ENCODE measurements at regions of chr12 and their contacts with region 1.

Region 1: DNA sequence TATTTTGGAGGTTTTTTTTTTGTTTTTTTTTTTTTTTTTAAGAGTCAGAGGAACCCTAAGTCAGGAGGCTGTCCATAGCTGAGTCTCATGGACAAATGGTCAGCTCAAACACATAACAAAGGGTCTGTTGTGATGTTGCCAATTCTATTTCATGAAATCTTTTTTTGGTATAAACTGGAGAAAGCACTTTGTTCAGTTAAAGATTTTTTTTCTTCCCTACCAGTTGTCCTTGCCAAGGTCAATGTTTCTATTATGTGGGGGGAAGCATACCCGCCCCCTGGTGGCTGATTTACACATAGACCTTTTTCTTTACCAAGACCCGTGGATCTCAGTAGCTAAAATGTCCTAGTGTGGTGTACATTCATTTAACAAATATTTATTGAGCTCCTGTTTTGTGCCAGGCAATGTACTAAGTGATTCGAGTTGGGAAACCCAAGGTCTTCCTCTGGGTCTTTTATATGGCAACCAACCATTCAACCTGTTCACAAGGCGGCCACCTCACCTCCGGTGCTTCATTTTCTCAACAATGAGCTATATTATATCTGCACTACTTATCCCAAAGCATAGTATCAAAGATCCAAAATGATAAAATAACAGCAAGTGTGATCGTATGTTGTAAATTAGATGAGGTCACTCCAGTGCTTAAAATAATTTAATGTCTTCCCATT is 214.5 kb downstream of the PAH start:
- DNase-seq: peak in 2 of 9 donors; percentile 1 to 37
- ATAC-seq: no peak
- H3K4me3 ChIP-seq: no peak overlapping the region
- H3K4me3 Mint-ChIP-seq: no peak overlapping the region
- H3K27ac ChIP-seq: no peak overlapping the region
- H3K27ac Mint-ChIP-seq: no peak overlapping the region
- H3K4me1 ChIP-seq: no peaks in the 10 kb centered on the region
- H3K4me1 Mint-ChIP-seq: no peaks in the 10 kb centered on the region
- H3K27me3 ChIP-seq: no peaks in the 10 kb centered on the region
- H3K27me3 Mint-ChIP-seq: peaks cover 8 to 31% (median 8%) of the 10 kb centered on the region in 5 donors

Region 2: DNA sequence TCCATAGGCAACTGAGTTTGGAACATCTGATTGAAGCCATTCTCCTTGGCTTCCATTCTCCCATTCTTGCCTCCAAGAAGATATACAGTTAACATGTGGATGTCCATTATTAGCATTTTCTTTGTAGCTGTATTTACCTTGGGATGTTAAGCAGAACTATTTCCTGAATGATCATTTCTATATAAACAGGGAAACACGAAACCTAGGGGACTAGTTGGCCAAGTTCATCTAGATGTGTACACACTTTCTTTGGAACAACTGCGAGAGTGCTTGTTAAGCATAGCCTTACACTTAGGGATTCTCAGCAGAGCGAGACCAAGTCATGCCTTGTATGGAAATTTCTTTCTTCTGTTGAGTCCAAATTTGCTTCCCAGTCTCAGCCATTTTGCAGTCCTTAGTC is 783.1 kb before region 1 on chr12:
- CTCF ChIA-PET with region 1: no interaction called
- POLR2A ChIA-PET with region 1: no interaction called
- intact Hi-C with region 1: loop called in 1 of 2 experiments (anchors 1 kb)
- DNase-seq: no peak
- ATAC-seq: no peak
- H3K4me3 ChIP-seq: no peak overlapping the region
- H3K4me3 Mint-ChIP-seq: no peak overlapping the region
- H3K27ac ChIP-seq: no peak overlapping the region
- H3K27ac Mint-ChIP-seq: no peak overlapping the region
- H3K4me1 ChIP-seq: no peaks in the 10 kb centered on the region
- H3K4me1 Mint-ChIP-seq: peaks cover 0 to 13% (median 3%) of the 10 kb centered on the region in 7 donors
- H3K27me3 ChIP-seq: no peaks in the 10 kb centered on the region
- H3K27me3 Mint-ChIP-seq: peaks cover 0 to 5% (median 0%) of the 10 kb centered on the region in 5 donors

Region 3: GRCh38 chr12:102095675-102096263 is 606.8 kb before region 1 on chr12:
- CTCF ChIA-PET with region 1: no interaction called
- POLR2A ChIA-PET with region 1: no interaction called
- intact Hi-C with region 1: loop called in 1 of 2 experiments (anchors 1 kb)
- DNase-seq: no peak
- ATAC-seq: peak; percentile 56
- H3K4me3 ChIP-seq: no peak overlapping the region
- H3K4me3 Mint-ChIP-seq: no peak overlapping the region
- H3K27ac ChIP-seq: no peak overlapping the region
- H3K27ac Mint-ChIP-seq: no peak overlapping the region
- H3K4me1 ChIP-seq: no peaks in the 10 kb centered on the region
- H3K4me1 Mint-ChIP-seq: peaks cover 0 to 5% (median 3%) of the 10 kb centered on the region in 7 donors
- H3K27me3 ChIP-seq: no peaks in the 10 kb centered on the region
- H3K27me3 Mint-ChIP-seq: no peaks in the 10 kb centered on the region

Region 4: DNA sequence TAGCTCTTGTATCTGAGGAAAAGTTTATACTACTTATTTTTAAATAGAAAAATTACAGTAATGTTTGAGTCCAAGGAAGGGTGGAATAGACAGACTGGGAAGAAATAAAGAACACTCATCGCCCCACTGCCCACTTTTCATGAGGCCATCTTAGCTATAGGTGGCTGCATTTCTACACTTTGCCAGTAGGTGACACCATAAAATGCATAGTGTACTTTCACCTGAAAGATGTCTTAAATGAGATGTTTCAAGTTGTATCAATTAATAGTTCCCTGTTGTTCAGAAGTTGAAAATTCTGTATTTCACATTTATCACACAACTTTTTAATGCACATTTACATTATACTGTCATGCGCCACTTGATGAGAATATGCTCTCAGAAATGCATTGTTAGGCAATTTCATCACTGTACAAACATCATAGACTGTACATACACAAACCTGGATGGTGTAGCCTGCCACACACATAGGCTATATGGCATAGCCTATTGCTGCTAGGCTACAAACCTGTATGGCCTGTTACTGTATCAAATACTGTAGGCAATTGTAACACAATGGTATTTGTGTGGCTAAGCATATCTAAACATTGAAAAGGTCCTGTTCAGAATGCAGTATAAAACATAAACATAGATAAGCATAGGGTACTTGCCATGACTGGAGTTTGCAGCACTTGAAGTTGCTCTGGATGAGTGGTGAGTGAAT is 532.5 kb before region 1 on chr12:
- CTCF ChIA-PET with region 1: no interaction called
- POLR2A ChIA-PET with region 1: no interaction called
- intact Hi-C with region 1: loop called in 1 of 2 experiments (anchors 2 kb)
- DNase-seq: peak in 2 of 9 donors; percentile 2 to 5
- ATAC-seq: peak; percentile 54
- H3K4me3 ChIP-seq: no peak overlapping the region
- H3K4me3 Mint-ChIP-seq: no peak overlapping the region
- H3K27ac ChIP-seq: no peak overlapping the region
- H3K27ac Mint-ChIP-seq: no peak overlapping the region
- H3K4me1 ChIP-seq: no peaks in the 10 kb centered on the region
- H3K4me1 Mint-ChIP-seq: peaks cover 0 to 17% (median 0%) of the 10 kb centered on the region in 7 donors
- H3K27me3 ChIP-seq: no peaks in the 10 kb centered on the region
- H3K27me3 Mint-ChIP-seq: no peaks in the 10 kb centered on the region

Region 5: GRCh38 chr12:102735104-102735503 is 32.5 kb after region 1 on chr12:
- CTCF ChIA-PET with region 1: no interaction called
- POLR2A ChIA-PET with region 1: no interaction called
- intact Hi-C with region 1: no loop called
- DNase-seq: no peak
- ATAC-seq: peak; percentile 42
- H3K4me3 ChIP-seq: no peak overlapping the region
- H3K4me3 Mint-ChIP-seq: peak overlapping the region in 1 of 10 donors; percentile 54
- H3K27ac ChIP-seq: no peak overlapping the region
- H3K27ac Mint-ChIP-seq: peak overlapping the region in 1 of 9 donors; percentile 29
- H3K4me1 ChIP-seq: no peaks in the 10 kb centered on the region
- H3K4me1 Mint-ChIP-seq: peaks cover 0 to 7% (median 0%) of the 10 kb centered on the region in 7 donors
- H3K27me3 ChIP-seq: no peaks in the 10 kb centered on the region
- H3K27me3 Mint-ChIP-seq: no peaks in the 10 kb centered on the region